GM12878 (cell line): ENCODE measurements at regions of chr16 and their contacts with region 1.

Region 1: GRCh38 chr16:3292604-3293003 is 9.3 kb downstream of the ZNF263 start:
- DNase-seq: no peak
- ATAC-seq: no peak
- H3K4me3 ChIP-seq: no peak overlapping the region
- H3K27ac ChIP-seq: no peak overlapping the region
- H3K4me1 ChIP-seq: no peaks in the 10 kb centered on the region
- H3K27me3 ChIP-seq: no peaks in the 10 kb centered on the region
- CTCF ChIP-seq: no peak
- EP300 ChIP-seq: no peak
- POLR2A ChIP-seq: no peak
- RAD21 ChIP-seq: no peak

Region 2: DNA sequence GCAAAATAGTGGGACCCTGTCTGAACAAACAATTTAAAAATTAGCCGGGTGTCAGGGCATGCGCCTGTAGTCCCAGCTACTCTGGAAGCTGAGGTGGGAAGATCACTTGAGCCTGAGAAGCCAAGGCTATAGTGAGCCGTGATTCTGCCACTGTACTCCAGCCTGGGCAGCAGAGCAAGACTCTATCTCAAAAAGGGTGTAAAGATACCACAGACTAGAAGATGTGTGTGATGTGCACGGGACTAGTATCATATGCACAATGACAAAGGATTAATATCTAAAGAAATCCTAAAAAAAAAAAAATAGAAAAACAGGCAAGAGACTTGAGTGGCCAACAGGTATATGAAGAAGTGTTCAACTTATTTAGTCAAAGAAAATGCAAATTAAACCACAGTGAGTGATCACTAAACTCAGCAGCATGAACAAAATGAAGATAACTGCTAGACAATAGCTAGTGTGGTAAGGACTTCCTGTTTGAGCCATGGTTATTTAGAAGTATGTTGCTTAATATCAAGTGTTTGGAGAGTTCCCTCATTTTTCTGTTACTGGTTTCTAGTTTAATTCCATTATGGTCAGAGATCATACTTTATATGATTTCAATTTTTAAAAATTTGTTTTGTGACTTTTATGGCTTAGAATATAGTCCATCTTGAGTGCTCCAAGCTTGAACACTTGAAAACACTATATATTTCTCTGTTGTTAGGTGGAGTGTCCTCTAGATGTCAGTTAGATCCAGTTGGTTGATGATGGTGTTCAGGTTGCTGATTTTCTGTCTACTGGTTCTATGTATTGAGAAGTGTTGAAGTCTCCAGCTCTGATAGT is 333.5 kb after region 1 on chr16:
- CTCF ChIA-PET with region 1: no interaction called
- POLR2A ChIA-PET with region 1: interaction called, 12 read pairs
- RAD21 ChIA-PET with region 1: no interaction called
- SMC1A ChIA-PET with region 1: no interaction called
- in situ Hi-C with region 1: no loop called
- intact Hi-C with region 1: no loop called
- DNase-seq: no peak
- ATAC-seq: peak; percentile 86
- H3K4me3 ChIP-seq: peak overlapping the region; percentile 16; the same call in 1 of the 2 replicates
- H3K27ac ChIP-seq: peak overlapping the region; percentile 82
- H3K4me1 ChIP-seq: peaks cover 41% of the 10 kb centered on the region
- H3K27me3 ChIP-seq: no peaks in the 10 kb centered on the region
- CTCF ChIP-seq: peak in 2 of 3 experiments; percentile 19 to 35; a peak in 2 of 6 replicates
- EP300 ChIP-seq: 0 out of 4 replicates have a peak, but pooled peaks of 1 of the 2 experiments have one; percentile 43
- POLR2A ChIP-seq: no peak
- RAD21 ChIP-seq: peak; percentile 43; the same call in 1 of the 2 replicates